Endothelial cell of umbilical vein (primary cell): ENCODE measurements at regions of chrX and their contacts with region 1.

Region 1: DNA sequence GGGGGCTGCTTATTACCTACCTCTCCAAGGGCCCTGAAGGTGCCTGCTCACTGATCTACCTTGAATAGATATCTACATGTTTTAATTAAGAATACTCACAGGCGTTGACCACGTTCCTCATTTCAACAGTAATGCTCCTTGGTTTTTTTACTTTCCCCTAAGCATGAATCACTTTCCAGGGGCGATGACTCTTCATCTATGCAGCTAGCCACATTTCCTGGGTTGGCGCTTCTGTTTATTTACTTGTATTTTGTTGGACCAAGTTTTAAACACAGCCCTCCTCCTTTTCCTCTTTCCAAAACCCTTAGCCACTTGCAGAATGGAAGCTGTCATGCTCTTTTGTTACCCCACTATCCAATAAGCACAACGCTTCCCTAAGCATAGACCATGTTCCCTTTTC is 50.8 kb downstream of the CBLL2 start:
- DNase-seq: peak; percentile 58
- H3K4me3 ChIP-seq: no peak overlapping the region
- H3K27ac ChIP-seq: peak overlapping the region; percentile 74
- H3K4me1 ChIP-seq: peaks cover 19% of the 10 kb centered on the region
- H3K27me3 ChIP-seq: no peaks in the 10 kb centered on the region
- CTCF ChIP-seq: no peak
- POLR2A ChIP-seq: no peak

Region 2: GRCh38 chrX:22373766-22374165 is 50.2 kb after region 1 on chrX:
- CTCF ChIA-PET with region 1: no interaction called
- POLR2A ChIA-PET with region 1: no interaction called
- dilution Hi-C with region 1: no loop called
- intact Hi-C with region 1: loop called (anchors 5 kb)
- DNase-seq: peak; percentile 34
- H3K4me3 ChIP-seq: no peak overlapping the region
- H3K27ac ChIP-seq: peak overlapping the region; percentile 23
- H3K4me1 ChIP-seq: peaks cover 13% of the 10 kb centered on the region
- H3K27me3 ChIP-seq: no peaks in the 10 kb centered on the region
- CTCF ChIP-seq: no peak
- POLR2A ChIP-seq: no peak

Region 3: DNA sequence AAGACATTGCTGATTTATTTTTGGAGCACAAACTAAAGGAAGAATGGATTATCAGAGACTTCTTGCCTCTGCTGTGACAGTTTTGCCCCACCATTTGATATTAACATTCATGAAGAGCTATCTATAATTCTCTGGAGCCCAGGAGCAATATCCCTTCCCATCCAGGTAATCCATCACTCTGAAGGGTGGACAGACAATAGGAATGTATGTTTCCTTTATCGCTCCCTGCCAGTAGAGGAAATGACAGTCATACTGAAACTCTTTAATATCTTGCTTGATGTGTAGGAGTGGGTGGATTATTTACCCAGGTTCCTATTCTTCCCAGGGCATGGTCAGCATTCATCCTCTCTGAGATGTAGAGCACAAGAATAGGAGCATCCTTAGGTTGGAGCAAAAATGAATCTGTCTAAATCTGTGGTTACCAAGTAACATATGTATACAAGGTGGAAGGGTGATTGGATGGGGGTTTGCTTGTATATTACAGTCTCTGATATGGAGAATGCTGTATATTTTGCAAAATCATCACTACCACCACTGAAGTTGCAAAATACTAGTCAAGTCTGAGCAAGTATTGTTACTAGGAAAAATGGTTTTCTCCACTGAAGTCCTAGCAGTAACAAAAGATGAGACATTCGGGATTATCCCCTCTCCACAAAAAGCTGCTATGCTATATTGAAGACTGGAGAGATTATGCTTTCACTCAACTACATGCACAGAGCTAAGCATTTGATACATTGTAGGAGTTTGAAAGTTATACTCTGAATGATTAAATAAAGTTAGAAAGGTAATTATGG is 100.8 kb after region 1 on chrX:
- CTCF ChIA-PET with region 1: no interaction called
- POLR2A ChIA-PET with region 1: no interaction called
- dilution Hi-C with region 1: no loop called
- intact Hi-C with region 1: loop called (anchors 2 kb)
- DNase-seq: peak; percentile 41
- H3K4me3 ChIP-seq: no peak overlapping the region
- H3K27ac ChIP-seq: peak overlapping the region; percentile 31
- H3K4me1 ChIP-seq: peaks cover 33% of the 10 kb centered on the region
- H3K27me3 ChIP-seq: no peaks in the 10 kb centered on the region
- CTCF ChIP-seq: no peak
- POLR2A ChIP-seq: no peak